ENCODE measurements at regions of chr6 and their contacts with region 1.

Region 1: GRCh38 chr6:134063966-134064445 is 11.6 kb upstream of the SLC2A12 start:
- DNase-seq: peak; percentile 47
- H3K4me3 ChIP-seq: no peak overlapping the region
- CTCF ChIP-seq: peak; percentile 93

Region 2: GRCh38 chr6:133923938-133924593 is 139.9 kb before region 1 on chr6:
- CTCF ChIA-PET with region 1: interaction called, 116 read pairs
- POLR2A ChIA-PET with region 1: no interaction called
- DNase-seq: peak; percentile 33
- H3K4me3 ChIP-seq: no peak overlapping the region
- CTCF ChIP-seq: peak; percentile 68

Region 3: GRCh38 chr6:133952815-133953633 is 111.0 kb before region 1 on chr6 and contains the start of gene TBPL1:
- CTCF ChIA-PET with region 1: interaction called, 40 read pairs
- POLR2A ChIA-PET with region 1: interaction called, 3 read pairs
- DNase-seq: peak; percentile 69
- H3K4me3 ChIP-seq: peak within 1 kb of the TSS; percentile 82
- CTCF ChIP-seq: no peak

Region 4: DNA sequence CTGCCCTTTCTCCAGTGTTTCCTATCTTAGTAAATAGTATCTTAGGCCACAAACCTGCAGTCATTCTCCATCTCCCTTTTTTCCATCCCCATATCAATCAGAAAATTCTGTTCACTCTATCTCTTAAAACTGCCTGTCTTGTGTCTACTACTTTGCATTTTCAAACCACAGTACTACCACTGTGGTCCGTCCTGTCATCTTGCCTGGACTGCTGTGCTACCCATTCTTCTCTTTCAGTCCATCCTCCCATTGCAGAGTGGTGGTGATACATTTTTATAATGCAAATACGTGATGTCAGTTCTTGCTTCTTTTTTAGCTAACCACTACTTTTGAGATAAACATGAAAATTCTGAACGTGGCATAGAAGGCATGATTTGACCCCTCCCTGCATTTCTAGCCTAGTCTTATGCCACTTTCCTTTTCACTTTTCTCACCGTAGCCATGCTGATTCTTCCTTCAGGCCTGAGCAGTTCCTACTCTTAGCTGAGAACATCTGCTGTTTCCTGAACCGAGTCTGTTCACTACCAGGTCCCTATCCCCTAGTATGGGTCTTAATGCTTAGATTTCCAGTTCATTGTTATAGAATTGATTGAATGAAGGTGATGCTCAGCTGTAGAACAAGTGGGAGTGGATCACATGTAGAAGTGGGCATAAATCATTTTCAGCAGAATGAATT is 97.2 kb before region 1 on chr6:
- CTCF ChIA-PET with region 1: interaction called, 35 read pairs
- POLR2A ChIA-PET with region 1: no interaction called
- DNase-seq: no peak
- H3K4me3 ChIP-seq: no peak overlapping the region
- CTCF ChIP-seq: no peak

Region 5: GRCh38 chr6:133991096-133991593 is 72.9 kb before region 1 on chr6:
- CTCF ChIA-PET with region 1: interaction called, 45 read pairs
- POLR2A ChIA-PET with region 1: interaction called, 4 read pairs
- DNase-seq: peak; percentile 92
- H3K4me3 ChIP-seq: no peak overlapping the region
- CTCF ChIP-seq: no peak

Region 6: DNA sequence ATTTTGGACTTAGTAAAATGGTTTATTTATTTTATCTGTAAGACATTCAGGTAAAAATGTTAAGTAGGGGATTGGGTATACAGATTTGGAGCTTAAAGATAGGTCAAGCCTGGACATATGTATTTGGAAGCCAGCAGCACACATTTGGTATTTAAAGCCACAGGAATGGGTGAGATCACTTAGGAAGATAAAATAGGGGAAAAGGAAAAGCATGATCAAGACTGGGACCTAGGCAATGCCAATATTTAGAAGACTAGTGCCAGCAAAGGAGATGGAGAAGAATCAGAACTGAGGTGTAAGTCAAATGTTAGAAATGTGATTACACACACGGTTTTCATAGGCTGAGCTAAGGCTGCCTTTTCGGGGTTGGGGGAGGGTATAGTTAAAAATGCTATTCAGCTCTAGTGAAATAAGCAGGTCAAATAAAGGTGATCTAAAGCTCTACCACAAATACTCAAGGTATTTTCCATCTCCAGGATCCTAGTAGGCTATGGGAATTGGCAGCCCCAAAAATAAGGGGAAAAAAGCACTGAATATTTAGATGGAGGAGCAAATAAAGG is 32.2 kb before region 1 on chr6:
- CTCF ChIA-PET with region 1: interaction called, 13 read pairs
- POLR2A ChIA-PET with region 1: no interaction called
- DNase-seq: no peak
- H3K4me3 ChIP-seq: no peak overlapping the region
- CTCF ChIP-seq: no peak

Region 7: DNA sequence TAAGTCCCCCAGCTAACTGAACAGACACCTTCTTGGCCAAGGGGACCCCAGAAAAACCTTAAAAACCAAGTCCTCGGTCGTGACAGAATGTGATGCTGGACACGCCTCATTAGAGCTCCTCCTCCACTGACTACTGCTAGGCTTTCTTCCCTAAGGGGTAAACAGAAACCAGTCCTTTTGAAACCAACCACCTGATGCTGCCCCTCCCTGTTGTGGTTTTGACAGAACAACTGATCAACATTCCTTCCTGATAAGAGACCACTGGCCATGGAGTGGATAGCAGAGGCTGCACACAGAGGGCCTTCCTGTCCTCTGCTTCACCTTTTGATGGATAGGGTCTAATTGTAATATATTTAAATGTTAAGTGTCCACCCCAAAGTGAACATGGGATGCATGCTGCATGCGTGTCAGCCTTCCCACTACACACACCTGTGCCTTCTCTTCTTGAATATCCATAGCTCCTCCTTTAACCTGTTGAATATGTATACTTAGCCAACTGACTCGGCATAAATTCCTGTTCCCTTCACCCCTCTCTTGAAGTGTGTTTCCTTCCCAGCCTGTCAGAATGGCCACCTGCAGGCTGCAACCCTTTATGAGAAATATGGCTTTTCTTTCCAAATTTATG is 16.3 kb after region 1 on chr6:
- CTCF ChIA-PET with region 1: interaction called, 36 read pairs
- POLR2A ChIA-PET with region 1: no interaction called
- DNase-seq: no peak
- H3K4me3 ChIP-seq: no peak overlapping the region
- CTCF ChIP-seq: no peak

Measured in AG04449 (cell line).